Heart left ventricle (tissue), 16 donors: ENCODE measurements at regions of chr2 and their contacts with region 1.

Region 1: DNA sequence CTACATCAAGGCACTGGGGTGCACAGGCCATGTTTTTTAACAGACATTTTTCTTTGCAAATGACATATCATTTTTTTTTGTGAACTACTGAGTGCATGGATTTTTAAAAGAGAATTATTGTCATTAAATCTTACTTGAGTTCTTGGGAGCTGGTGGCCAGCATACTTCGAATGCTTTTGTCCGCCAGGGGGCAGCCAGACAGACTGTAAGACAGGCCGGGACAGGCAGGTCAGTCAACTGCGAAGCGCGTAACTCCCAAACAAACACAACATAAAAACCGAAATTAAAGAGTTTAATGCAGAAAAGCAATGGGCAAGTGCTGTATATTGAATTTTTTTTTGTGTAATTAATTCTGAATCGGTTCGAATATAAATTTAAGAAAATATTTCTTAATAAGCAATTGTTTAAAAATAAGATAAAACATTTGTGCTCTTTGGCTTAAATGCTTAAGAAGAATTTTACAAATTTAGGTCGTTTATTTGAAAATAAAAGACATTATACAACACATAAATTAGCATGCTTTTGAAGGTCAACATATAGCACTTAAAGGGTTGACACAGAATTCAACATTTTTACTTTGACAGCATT is 142.2 kb upstream of the PXDN start:
- DNase-seq: peak; percentile 54 to 80 (median 77)
- ATAC-seq: peak in 2 of 4 donors; percentile 51 to 59
- H3K4me3 ChIP-seq: no peak overlapping the region
- H3K27ac ChIP-seq: no peak overlapping the region
- H3K4me1 ChIP-seq: peaks cover 0 to 9% (median 0%) of the 10 kb centered on the region in 12 donors
- H3K27me3 ChIP-seq: peaks cover 0 to 8% (median 0%) of the 10 kb centered on the region in 9 donors
- CTCF ChIP-seq: peak; percentile 55 to 83 (median 69)
- POLR2A ChIP-seq: no peak

Region 2: GRCh38 chr2:1793868-1794445 is 92.5 kb before region 1 on chr2:
- intact Hi-C with region 1: no loop called
- DNase-seq: peak; percentile 27 to 79 (median 71)
- ATAC-seq: peak in 3 of 4 donors; percentile 57 to 88 (median 83)
- H3K4me3 ChIP-seq: no peak overlapping the region
- H3K27ac ChIP-seq: no peak overlapping the region
- H3K4me1 ChIP-seq: peaks cover 0 to 13% (median 0%) of the 10 kb centered on the region in 12 donors
- H3K27me3 ChIP-seq: peaks cover 0 to 8% (median 0%) of the 10 kb centered on the region in 9 donors
- CTCF ChIP-seq: no peak
- POLR2A ChIP-seq: no peak

Region 3: DNA sequence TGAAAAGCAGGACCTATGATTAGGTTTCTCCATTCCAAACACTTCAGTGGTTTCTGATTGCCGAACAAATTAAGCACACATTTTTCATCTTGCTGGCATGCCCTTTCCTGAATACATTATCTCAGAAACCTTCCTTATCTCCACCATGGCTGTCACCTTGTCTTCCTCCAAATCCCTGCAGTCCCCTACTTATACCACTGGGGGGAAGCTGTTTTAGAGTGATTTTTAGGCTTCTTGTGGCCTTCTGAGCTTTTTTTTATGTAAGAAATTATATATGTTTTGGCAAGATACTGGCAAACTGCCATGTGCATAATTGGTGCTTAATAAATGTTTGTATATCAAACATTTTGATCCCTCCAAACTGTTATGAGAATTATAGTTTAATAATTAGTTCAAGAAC is 215.4 kb after region 1 on chr2:
- intact Hi-C with region 1: loop called in 1 of 10 experiments (anchors 10 kb)
- DNase-seq: no peak
- ATAC-seq: no peak
- H3K4me3 ChIP-seq: no peak overlapping the region
- H3K27ac ChIP-seq: no peak overlapping the region
- H3K4me1 ChIP-seq: peaks cover 0 to 1% (median 0%) of the 10 kb centered on the region in 12 donors
- H3K27me3 ChIP-seq: peaks cover 0 to under 1% (median 0%) of the 10 kb centered on the region in 9 donors
- CTCF ChIP-seq: peak in 7 of 12 donors; percentile 4 to 32 (median 20)
- POLR2A ChIP-seq: no peak

Region 4: GRCh38 chr2:2112416-2113105 is 226.1 kb after region 1 on chr2:
- intact Hi-C with region 1: loop called in 2 of 10 experiments (anchors 10 kb)
- DNase-seq: no peak
- ATAC-seq: no peak
- H3K4me3 ChIP-seq: no peak overlapping the region
- H3K27ac ChIP-seq: no peak overlapping the region
- H3K4me1 ChIP-seq: peaks cover 0 to 17% (median 8%) of the 10 kb centered on the region in 12 donors
- H3K27me3 ChIP-seq: peaks cover 0 to 10% (median 0%) of the 10 kb centered on the region in 9 donors
- CTCF ChIP-seq: no peak
- POLR2A ChIP-seq: no peak

Region 5: GRCh38 chr2:2229626-2230432 is 343.3 kb after region 1 on chr2:
- intact Hi-C with region 1: loop called in 1 of 10 experiments (anchors 5 kb)
- DNase-seq: no peak
- ATAC-seq: no peak
- H3K4me3 ChIP-seq: no peak overlapping the region
- H3K27ac ChIP-seq: no peak overlapping the region
- H3K4me1 ChIP-seq: peaks cover 0 to 3% (median 0%) of the 10 kb centered on the region in 12 donors
- H3K27me3 ChIP-seq: peaks cover 0 to 3% (median 0%) of the 10 kb centered on the region in 9 donors
- CTCF ChIP-seq: peak in 1 of 12 donors; percentile 20
- POLR2A ChIP-seq: no peak